GM13976 (cell line): ENCODE measurements at regions of chr22 and their contacts with region 1.

Region 1: DNA sequence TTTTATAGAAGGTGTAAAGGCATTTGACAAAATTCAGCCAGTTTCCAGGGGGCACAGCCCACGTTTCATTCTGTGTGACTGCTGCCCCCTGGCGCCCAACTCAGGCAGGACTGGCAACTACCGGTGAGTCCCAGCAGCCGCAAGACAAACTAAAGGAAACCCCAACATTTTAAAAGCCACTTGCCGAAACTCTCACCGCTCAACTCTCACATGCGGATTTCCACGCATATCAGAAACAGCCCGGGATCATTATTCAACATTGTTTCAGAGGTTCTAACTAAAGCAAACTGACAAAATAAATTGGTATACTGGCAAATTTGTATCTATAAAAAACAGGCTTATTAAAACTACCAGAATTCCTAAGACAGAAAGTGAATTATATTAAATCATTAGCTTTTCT is 48.2 kb downstream of the MORC2 start:
- DNase-seq: peak; percentile 84
- CTCF ChIP-seq: peak; percentile 92

Region 2: GRCh38 chr22:30634471-30635233 is 285.8 kb before region 1 on chr22:
- in situ Hi-C with region 1: loop called (anchors 25 kb)
- DNase-seq: peak; percentile 94
- CTCF ChIP-seq: peak; percentile 92

Region 3: DNA sequence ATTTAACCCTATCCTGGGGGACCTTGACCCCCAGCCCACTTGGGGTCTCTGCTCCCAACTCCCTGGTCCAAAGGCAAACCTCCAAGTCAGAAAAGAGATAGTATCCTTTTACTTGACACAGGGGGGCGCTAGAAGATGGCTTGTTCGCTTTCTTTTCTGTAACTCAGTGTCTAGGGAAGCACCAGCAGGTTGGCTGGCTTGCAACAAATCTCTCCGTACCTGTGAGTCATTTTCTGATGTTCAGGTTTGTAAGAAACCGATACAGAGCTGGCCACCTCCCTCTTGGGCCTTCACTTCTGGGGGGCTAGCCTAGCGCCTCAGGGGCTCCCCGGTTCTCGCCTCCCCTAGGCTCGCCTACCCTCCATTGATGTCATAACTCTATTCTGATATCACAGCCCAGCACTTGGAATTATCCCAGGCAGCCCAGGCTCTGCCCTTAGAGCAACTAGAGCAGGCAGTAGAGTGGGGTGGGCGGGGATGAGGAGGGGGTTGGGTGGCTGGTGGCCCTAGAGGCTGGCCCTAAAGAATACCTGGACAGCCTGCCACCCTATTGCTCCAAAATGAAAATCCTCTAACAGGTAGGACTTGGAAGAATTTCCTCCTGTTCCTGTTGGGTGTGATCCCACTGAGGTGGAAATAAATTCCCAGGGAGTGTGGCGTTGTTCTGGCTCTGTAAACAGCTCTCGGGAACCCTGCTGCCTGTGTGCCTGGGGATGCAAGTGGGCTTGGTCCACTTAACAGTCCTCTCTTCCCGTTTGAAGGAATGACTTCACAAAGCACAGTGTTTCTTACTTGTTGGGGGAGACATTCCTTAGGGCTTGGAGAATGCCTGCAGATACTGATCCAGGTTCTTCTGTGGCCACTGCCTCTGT is 156.4 kb before region 1 on chr22:
- in situ Hi-C with region 1: loop called (anchors 10 kb)
- DNase-seq: peak; percentile 79
- CTCF ChIP-seq: peak; percentile 26